Activated CD4-positive, alpha-beta T cell treated with anti-CD3 and anti-CD28 coated beads, Interleukin-2, amount 10 ng/mL, durations not matched to agents 24 days and 14 days (primary cell): ENCODE measurements at regions of chr3 and their contacts with region 1.

Region 1: GRCh38 chr3:102229062-102229655 is 205.7 kb upstream of the ZPLD1 start:
- DNase-seq: peak; percentile 93
- H3K4me3 Mint-ChIP-seq: no peak overlapping the region
- H3K27ac Mint-ChIP-seq: no peak overlapping the region
- H3K4me1 Mint-ChIP-seq: peaks cover 10% of the 10 kb centered on the region
- H3K27me3 Mint-ChIP-seq: peaks cover 24% of the 10 kb centered on the region

Region 2: DNA sequence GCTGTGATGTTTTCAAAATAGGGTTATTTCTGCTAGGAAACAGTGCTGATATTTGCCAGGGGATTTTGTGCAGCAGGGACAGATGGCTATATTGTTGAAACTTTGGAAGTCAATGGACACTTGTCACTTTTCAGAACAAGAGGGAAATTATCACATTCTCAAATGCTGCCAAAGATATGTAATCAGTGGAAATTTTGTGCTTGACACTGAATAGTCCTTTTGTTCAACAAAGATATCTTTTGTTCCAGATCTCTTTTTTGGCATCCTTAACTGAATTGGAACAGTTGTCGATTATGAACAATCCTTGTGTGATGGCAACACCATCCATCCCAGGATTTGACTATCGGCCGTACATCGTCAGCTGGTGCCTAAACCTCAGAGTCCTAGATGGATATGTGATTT is 496.9 kb before region 1 on chr3:
- intact Hi-C with region 1: no loop called
- DNase-seq: no peak
- H3K4me3 Mint-ChIP-seq: no peak overlapping the region
- H3K27ac Mint-ChIP-seq: no peak overlapping the region
- H3K4me1 Mint-ChIP-seq: no peaks in the 10 kb centered on the region
- H3K27me3 Mint-ChIP-seq: no peaks in the 10 kb centered on the region

Region 3: GRCh38 chr3:101809178-101810021 is 419.8 kb before region 1 on chr3:
- intact Hi-C with region 1: loop called (anchors 1 kb)
- DNase-seq: peak; percentile 80
- H3K4me3 Mint-ChIP-seq: no peak overlapping the region
- H3K27ac Mint-ChIP-seq: peak overlapping the region; percentile 36
- H3K4me1 Mint-ChIP-seq: peaks cover 37% of the 10 kb centered on the region
- H3K27me3 Mint-ChIP-seq: no peaks in the 10 kb centered on the region

Region 4: DNA sequence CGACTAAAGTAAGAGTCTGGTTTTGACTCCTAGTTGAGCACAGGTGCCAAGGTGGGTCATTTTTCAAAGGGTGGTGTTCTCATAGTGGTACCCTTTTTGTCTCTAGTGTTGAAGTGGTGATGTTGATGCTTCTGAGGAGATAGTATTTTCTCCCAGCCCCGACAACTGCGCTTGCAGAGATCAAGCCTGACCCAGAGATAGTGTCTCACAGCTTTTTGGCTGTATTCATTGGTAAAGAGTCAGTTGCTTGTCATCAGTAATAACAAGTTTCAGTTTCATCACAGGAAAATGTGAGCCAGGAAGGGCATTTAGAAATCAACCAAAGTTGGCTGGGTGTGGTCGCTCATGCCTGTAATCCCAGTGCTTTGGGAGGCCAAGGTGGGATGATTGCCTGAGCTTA is 240.6 kb before region 1 on chr3:
- intact Hi-C with region 1: loop called (anchors 10 kb)
- DNase-seq: peak; percentile 70
- H3K4me3 Mint-ChIP-seq: peak overlapping the region; percentile 31
- H3K27ac Mint-ChIP-seq: peak overlapping the region; percentile 73
- H3K4me1 Mint-ChIP-seq: peaks cover 39% of the 10 kb centered on the region
- H3K27me3 Mint-ChIP-seq: peaks cover 21% of the 10 kb centered on the region

Region 5: GRCh38 chr3:102248981-102249705 is 20.0 kb after region 1 on chr3:
- intact Hi-C with region 1: no loop called
- DNase-seq: no peak
- H3K4me3 Mint-ChIP-seq: no peak overlapping the region
- H3K27ac Mint-ChIP-seq: no peak overlapping the region
- H3K4me1 Mint-ChIP-seq: no peaks in the 10 kb centered on the region
- H3K27me3 Mint-ChIP-seq: peaks cover 21% of the 10 kb centered on the region

Region 6: DNA sequence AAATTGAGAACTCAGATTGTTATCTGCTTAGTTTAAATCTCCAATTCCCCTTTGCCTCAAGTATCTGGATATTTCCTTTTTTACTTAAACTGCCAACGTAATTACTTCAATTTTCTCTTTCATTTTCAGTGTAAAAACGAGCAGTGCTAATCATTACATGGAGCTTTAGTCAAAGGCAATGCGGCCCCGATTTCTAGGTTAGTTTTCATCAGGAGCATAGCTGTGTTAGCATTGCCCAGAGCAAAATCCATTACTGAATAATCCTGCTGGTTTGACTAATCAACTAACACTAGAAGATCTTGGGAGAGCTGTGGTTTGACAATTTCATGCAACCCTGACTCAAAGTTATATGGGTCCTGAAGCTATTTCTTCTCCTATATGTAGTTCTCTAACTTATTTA is 251.9 kb after region 1 on chr3:
- intact Hi-C with region 1: no loop called
- DNase-seq: no peak
- H3K4me3 Mint-ChIP-seq: no peak overlapping the region
- H3K27ac Mint-ChIP-seq: no peak overlapping the region
- H3K4me1 Mint-ChIP-seq: no peaks in the 10 kb centered on the region
- H3K27me3 Mint-ChIP-seq: peaks cover 5% of the 10 kb centered on the region

Region 7: GRCh38 chr3:102536456-102536855 is 307.3 kb after region 1 on chr3:
- intact Hi-C with region 1: loop called (anchors 1 kb)
- DNase-seq: peak; percentile 57
- H3K4me3 Mint-ChIP-seq: no peak overlapping the region
- H3K27ac Mint-ChIP-seq: no peak overlapping the region
- H3K4me1 Mint-ChIP-seq: peaks cover 3% of the 10 kb centered on the region
- H3K27me3 Mint-ChIP-seq: peaks cover 9% of the 10 kb centered on the region